H1 (cell line): ENCODE measurements at regions of chr12 and their contacts with region 1.

Region 1: DNA sequence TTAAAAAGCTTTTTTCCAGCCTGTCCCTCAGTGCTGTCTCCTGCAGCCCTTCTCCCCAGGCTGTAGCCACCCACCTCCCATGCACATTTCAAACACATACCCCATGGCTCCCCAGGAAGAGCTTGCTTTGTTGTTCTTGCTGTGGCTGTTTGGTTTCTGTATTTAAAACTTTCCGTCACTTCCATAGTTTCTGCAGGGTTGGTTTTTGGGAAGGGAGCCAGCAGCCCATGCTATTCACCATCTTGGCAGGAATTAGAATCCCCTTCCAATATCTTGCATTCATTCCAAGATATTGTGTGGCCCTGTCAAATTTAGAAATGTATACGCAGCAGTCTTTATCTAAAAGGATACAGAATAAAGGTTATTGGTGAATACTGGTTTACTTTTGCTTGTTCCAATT is 29.6 kb downstream of the CFAP251 start:
- DNase-seq: no peak
- H3K4me3 ChIP-seq: no peak overlapping the region
- H3K27ac ChIP-seq: no peak overlapping the region
- H3K4me1 ChIP-seq: peaks cover 0 to 9% (median 2%) of the 10 kb centered on the region in 4 experiments; a peak in 1 of 7 replicates
- H3K27me3 ChIP-seq: no peaks in the 10 kb centered on the region
- CTCF ChIP-seq: no peak
- EP300 ChIP-seq: no peak
- POLR2A ChIP-seq: no peak
- RAD21 ChIP-seq: no peak

Region 2: GRCh38 chr12:121958541-121959240 is 10.7 kb after region 1 on chr12:
- CTCF ChIA-PET with region 1: interaction called, 11 read pairs
- POLR2A ChIA-PET with region 1: no interaction called
- DNase-seq: no peak
- H3K4me3 ChIP-seq: no peak overlapping the region
- H3K27ac ChIP-seq: no peak overlapping the region
- H3K4me1 ChIP-seq: peaks cover 0 to 9% (median 3%) of the 10 kb centered on the region in 4 experiments; a peak in 3 of 7 replicates
- H3K27me3 ChIP-seq: no peaks in the 10 kb centered on the region
- CTCF ChIP-seq: no peak
- EP300 ChIP-seq: no peak
- POLR2A ChIP-seq: no peak
- RAD21 ChIP-seq: no peak

Region 3: DNA sequence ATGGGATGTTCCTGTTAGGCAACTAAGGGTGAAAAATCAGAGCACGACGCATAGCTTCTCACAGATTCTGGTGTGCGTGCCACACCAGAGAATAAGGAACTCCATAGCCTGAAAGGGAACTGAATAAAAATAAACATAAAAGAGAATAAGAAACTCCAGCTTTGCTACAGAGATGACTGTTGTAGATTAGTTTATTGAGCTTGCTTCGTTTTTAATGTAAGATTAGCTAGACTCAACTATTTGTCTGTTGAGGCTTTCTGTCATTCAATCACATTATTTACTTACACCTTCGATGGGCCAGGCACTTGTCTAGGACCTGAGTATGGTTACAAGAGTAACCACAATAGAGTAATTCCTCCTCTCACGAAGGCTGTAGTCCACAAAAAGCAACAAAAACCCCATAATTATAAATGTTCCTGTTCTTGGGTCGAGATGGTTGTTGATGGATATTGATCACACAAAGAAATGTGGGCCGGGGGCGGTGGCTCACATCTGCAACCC is 553.6 kb after region 1 on chr12:
- CTCF ChIA-PET with region 1: no interaction called
- POLR2A ChIA-PET with region 1: no interaction called
- DNase-seq: no peak
- H3K4me3 ChIP-seq: peak overlapping the region in 1 of 4 experiments; percentile 96; a peak in 2 of 8 replicates
- H3K27ac ChIP-seq: peak overlapping the region; percentile 53; the same call in 1 of the 2 replicates
- H3K4me1 ChIP-seq: peaks cover 0 to 3% (median 0%) of the 10 kb centered on the region in 4 experiments; a peak in 1 of 7 replicates
- H3K27me3 ChIP-seq: no peaks in the 10 kb centered on the region
- CTCF ChIP-seq: no peak
- EP300 ChIP-seq: no peak
- POLR2A ChIP-seq: no peak
- RAD21 ChIP-seq: no peak